Left ventricle myocardium inferior (tissue), 1 donor: ENCODE measurements at regions of chr18 and their contacts with region 1.

Region 1: DNA sequence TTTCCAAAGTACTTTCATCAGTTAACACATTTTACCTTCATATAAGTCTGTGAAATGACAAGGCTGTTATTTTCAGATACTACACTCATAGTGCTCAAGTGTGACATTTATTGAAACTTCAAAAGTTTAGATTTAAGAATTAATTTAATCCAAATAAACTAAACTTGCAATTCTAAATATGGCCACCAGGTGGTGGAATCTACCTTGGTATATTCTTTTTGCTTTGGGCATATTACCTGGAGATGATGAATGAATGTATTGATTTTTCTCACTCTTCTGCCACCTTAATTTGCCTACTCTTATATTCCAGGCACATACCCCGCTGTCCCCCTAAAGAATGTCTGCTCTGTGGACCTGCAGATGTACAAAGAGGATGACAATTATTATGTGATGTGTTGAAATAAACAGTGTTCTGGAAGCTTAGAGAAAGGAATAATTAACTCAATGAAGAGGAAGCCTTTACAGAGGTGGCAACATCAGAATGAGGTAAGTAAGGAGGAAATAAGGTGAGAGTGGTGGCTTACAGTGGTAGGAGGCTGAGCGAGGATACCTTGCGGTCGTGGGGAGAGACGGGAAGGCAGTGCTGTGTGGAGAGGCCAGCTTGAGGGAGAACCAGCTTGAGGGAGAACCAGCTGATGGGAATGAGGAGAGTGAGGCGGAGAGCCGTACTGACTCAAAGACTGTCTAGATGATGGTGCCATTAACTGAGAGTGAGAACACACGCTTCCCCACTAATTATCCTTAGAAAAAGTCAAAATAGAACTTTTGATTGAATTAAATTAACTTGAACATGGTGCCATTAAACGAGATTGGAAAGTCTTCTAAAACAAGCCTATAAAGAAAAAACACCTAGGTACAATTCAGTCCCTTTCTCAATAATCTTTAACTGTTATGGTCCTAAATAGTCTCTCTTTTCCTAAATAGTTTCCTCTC is 179.5 kb downstream of the CELF4 start:
- DNase-seq: no peak
- H3K4me3 ChIP-seq: no peak overlapping the region
- H3K27ac ChIP-seq: no peak overlapping the region
- H3K4me1 ChIP-seq: no peaks in the 10 kb centered on the region
- H3K27me3 ChIP-seq: peaks cover 33% of the 10 kb centered on the region
- CTCF ChIP-seq: peak; percentile 76

Region 2: GRCh38 chr18:35592298-35592697 is 1793.8 kb before region 1 on chr18:
- intact Hi-C with region 1: no loop called
- DNase-seq: no peak
- H3K4me3 ChIP-seq: no peak overlapping the region
- H3K27ac ChIP-seq: no peak overlapping the region
- H3K4me1 ChIP-seq: peaks cover 22% of the 10 kb centered on the region
- H3K27me3 ChIP-seq: no peaks in the 10 kb centered on the region
- CTCF ChIP-seq: no peak

Region 3: GRCh38 chr18:37537868-37538525 is 151.9 kb after region 1 on chr18:
- intact Hi-C with region 1: loop called (anchors 5 kb)
- DNase-seq: peak; percentile 72
- H3K4me3 ChIP-seq: no peak overlapping the region
- H3K27ac ChIP-seq: no peak overlapping the region
- H3K4me1 ChIP-seq: peaks cover 5% of the 10 kb centered on the region
- H3K27me3 ChIP-seq: peaks cover 99% of the 10 kb centered on the region
- CTCF ChIP-seq: peak; percentile 94